Posterior vena cava (tissue), 2 donors: ENCODE measurements at regions of chr14 and their contacts with region 1.

Region 1: DNA sequence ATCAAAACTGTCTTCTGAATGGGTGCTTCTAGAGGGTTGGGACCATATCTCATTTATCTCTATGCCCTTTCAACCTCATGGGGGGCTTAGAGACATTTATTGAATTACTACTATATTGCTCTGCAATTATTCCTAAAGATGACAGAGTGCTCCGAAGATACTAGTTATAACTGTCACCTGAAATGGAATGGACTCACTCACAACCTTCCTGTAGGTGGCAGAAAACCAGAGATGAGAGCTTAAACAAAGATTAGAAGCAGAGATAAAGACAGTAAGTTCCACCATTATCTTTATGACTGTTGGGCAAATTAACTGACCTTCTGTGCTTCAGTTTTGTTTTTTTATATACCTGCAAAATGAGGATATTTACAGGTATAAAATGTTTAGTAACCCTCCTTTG is 31.5 kb upstream of the GTF2A1 start:
- DNase-seq: no peak

Region 2: DNA sequence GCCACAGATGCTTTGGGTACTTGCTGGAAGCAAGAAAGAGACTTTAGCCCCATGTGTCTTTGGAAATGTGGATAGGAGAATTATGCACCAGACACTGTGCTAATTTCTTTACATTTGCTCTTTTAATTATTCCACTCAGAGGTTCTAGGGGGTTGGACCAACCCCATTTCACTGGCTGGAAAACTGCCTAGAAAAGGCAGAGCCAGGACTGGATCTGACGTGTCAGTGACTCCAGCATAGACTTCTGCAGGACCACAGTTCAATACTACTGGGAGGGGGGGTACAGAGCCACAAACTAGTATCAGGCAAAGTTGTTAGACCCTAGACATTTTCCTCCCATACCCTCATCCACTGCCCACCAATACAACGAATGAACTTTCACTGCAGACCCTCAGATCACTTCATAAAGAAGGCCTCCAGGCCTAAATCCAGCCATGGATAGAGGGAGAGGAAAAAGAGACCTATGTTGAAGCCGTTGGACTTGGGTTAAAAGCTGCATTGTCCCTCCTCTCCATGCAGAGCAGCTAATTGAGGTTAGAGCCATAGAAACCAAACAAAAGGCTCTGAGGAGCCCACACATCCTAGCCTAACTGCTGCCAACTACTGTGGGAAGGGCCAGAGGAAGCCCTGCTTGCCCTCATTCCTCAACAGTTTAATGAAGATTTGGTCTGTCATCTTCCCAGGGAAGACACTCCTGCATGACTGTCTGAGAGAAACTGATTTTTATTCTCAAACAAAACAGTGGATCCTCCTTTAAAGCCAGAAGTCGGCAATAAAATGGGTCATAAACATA is 79.2 kb after region 1 on chr14:
- intact Hi-C with region 1: loop called in 1 of 2 experiments (anchors 2 kb)
- DNase-seq: no peak

Region 3: DNA sequence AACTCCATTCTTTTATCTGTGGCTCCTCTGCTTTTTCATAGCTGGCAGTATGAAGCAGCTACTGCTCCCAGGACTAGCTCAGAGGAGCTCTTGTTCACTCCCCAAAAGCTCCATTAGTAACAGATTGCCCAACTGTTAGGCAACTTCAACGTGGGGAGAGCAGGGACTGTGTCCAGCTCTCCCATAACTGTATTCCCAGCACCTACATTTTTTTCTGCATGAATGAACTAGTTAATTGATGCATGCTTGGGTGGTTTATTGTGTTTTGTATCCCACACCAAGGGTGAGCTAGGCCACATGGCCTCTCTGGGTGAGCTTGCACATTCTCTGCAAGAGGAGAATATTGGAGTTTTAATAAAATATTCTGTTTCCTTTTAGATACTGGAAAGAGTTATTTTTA is 132.6 kb after region 1 on chr14:
- intact Hi-C with region 1: no loop called
- DNase-seq: no peak